HCT116 (cell line): ENCODE measurements at regions of chr4 and their contacts with region 1.

Region 1: GRCh38 chr4:150010525-150011126 is 67.6 kb upstream of the DCLK2 start:
- DNase-seq: peak; percentile 63
- ATAC-seq: peak; percentile 91
- H3K4me3 ChIP-seq: no peak overlapping the region
- H3K27ac ChIP-seq: no peak overlapping the region
- H3K4me1 ChIP-seq: peaks cover 0 to 8% of the 10 kb centered on the region in 2 experiments; a peak in 2 of 4 replicates
- H3K27me3 ChIP-seq: no peaks in the 10 kb centered on the region
- CTCF ChIP-seq: peak; percentile 59 to 74 (median 64); a peak in 5 of 6 replicates
- POLR2A ChIP-seq: no peak
- RAD21 ChIP-seq: peak; percentile 79

Region 2: DNA sequence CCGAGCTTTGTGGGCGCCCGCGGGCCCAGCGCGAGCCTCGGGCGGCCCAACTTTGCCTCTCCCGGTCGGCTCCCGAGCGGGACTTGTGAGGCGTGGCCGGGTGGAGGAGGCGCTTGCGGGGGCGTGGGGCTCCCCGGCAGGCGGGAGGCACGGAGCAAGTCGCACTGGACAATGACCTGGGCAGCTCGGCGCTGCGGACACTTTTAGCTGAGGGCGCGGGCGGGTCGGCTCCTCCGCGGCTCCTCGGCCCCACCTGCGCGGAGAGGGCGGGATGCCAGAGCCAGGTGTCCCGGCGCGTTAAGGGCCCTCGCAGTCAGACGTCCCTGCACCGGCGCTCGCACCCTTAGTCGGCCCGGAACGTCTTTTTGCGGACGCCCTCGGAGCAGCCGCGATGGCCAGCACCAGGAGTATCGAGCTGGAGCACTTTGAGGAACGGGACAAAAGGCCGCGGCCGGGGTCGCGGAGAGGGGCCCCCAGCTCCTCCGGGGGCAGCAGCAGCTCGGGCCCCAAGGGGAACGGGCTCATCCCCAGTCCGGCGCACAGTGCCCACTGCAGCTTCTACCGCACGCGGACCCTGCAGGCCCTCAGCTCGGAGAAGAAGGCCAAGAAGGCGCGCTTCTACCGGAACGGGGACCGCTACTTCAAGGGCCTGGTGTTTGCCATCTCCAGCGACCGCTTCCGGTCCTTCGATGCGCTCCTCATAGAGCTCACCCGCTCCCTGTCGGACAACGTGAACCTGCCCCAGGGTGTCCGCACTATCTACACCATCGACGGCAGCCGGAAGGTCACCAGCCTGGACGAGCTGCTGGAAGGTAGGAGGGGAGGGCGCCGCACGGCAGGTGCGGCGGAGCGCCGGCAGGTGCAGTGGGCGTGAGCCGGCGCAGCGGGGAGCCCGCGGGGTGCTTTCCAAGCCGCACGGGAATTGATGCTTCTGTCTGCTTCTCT is 68.3 kb after region 1 on chr4:
- CTCF ChIA-PET with region 1: no interaction called
- POLR2A ChIA-PET with region 1: no interaction called
- RAD21 ChIA-PET with region 1: no interaction called
- intact Hi-C with region 1: loop called (anchors 2 kb)
- DNase-seq: peak; percentile 6
- ATAC-seq: peak; percentile 72
- H3K4me3 ChIP-seq: peak overlapping the region; percentile 48 to 65
- H3K27ac ChIP-seq: peak overlapping the region; percentile 47; the same call in 1 of the 2 replicates
- H3K4me1 ChIP-seq: peaks cover 0 to 16% of the 10 kb centered on the region in 2 experiments; a peak in 2 of 4 replicates
- H3K27me3 ChIP-seq: no peaks in the 10 kb centered on the region
- CTCF ChIP-seq: no peak
- POLR2A ChIP-seq: no peak
- RAD21 ChIP-seq: no peak

Region 3: DNA sequence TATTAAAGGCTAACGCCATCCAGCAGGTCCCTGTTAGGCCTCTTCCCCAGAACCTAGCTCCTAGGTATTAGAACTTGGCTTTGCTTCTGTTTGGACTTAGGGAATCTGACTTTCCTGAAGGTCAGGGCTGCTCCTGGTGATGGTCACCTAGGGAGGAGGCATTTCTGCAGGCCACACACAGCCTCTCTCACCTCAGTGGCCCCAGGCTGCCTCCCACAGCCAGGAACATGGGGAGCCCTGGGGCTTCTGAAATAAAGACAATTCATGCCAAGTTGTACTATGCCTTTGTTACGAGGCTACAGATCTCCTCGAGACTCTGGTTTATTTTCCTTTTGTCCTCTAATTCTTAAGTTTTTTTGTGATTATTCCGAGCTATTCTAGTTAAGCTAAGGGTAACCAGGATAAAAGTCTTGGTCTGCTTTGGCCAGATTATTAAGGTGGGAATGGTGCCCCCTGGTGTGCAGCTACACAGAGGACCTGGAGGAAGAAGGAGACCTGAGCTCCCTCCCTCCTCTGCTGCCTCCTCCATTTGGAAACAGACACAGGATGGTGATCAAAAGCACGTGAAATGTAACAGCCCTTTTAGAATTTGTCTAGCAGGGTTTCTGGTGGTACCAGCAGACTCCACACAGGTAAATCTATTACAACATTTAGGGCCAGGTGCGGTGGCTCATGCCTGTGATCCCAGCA is 198.7 kb after region 1 on chr4:
- CTCF ChIA-PET with region 1: interaction called, 33 read pairs
- POLR2A ChIA-PET with region 1: no interaction called
- RAD21 ChIA-PET with region 1: interaction called in 1 of 2 experiments, 4 read pairs
- intact Hi-C with region 1: loop called (anchors 1 kb)
- DNase-seq: peak; percentile 49
- ATAC-seq: peak; percentile 94
- H3K4me3 ChIP-seq: no peak overlapping the region
- H3K27ac ChIP-seq: no peak overlapping the region
- H3K4me1 ChIP-seq: peaks cover 0 to 6% of the 10 kb centered on the region in 2 experiments; a peak in 1 of 4 replicates
- H3K27me3 ChIP-seq: no peaks in the 10 kb centered on the region
- CTCF ChIP-seq: peak; percentile 64 to 83 (median 69)
- POLR2A ChIP-seq: no peak
- RAD21 ChIP-seq: peak; percentile 82